HCT116 (cell line): ENCODE measurements at regions of chr12 and their contacts with region 1.

Region 1: GRCh38 chr12:109858764-109859163 is 21.6 kb downstream of the GLTP start:
- DNase-seq: no peak
- ATAC-seq: no peak
- H3K4me3 ChIP-seq: no peak overlapping the region
- H3K27ac ChIP-seq: no peak overlapping the region
- H3K4me1 ChIP-seq: no peaks in the 10 kb centered on the region
- H3K27me3 ChIP-seq: no peaks in the 10 kb centered on the region
- CTCF ChIP-seq: no peak
- POLR2A ChIP-seq: no peak
- RAD21 ChIP-seq: no peak

Region 2: GRCh38 chr12:109927622-109928021 is 68.9 kb after region 1 on chr12:
- CTCF ChIA-PET with region 1: interaction called, 3 read pairs
- POLR2A ChIA-PET with region 1: no interaction called
- RAD21 ChIA-PET with region 1: no interaction called
- intact Hi-C with region 1: loop called (anchors 1 kb)
- DNase-seq: peak; percentile 28
- ATAC-seq: peak; percentile 94
- H3K4me3 ChIP-seq: no peak overlapping the region
- H3K27ac ChIP-seq: no peak overlapping the region
- H3K4me1 ChIP-seq: no peaks in the 10 kb centered on the region
- H3K27me3 ChIP-seq: no peaks in the 10 kb centered on the region
- CTCF ChIP-seq: peak; percentile 65 to 83 (median 81); a peak in 5 of 6 replicates
- POLR2A ChIP-seq: no peak
- RAD21 ChIP-seq: peak; percentile 68